Activated CD4-positive, alpha-beta memory T cell treated with anti-CD3 and anti-CD28 coated beads for 36 hours (primary cell): ENCODE measurements at regions of chr11 and their contacts with region 1.

Region 1: GRCh38 chr11:65013692-65014145 is 241 bp upstream of the ARL2 start:
- DNase-seq: peak; percentile 89
- H3K4me3 Mint-ChIP-seq: peak overlapping the region; percentile 87
- H3K27ac Mint-ChIP-seq: peak overlapping the region; percentile 98
- H3K4me1 Mint-ChIP-seq: peaks cover 25% of the 10 kb centered on the region
- H3K27me3 Mint-ChIP-seq: no peaks in the 10 kb centered on the region

Region 2: GRCh38 chr11:64846998-64847666 is 166.6 kb before region 1 on chr11:
- CTCF ChIA-PET with region 1: interaction called, 56 read pairs
- POLR2A ChIA-PET with region 1: no interaction called
- intact Hi-C with region 1: loop called (anchors 1 kb)
- DNase-seq: peak; percentile 94
- H3K4me3 Mint-ChIP-seq: no peak overlapping the region
- H3K27ac Mint-ChIP-seq: peak overlapping the region; percentile 18
- H3K4me1 Mint-ChIP-seq: peaks cover 48% of the 10 kb centered on the region
- H3K27me3 Mint-ChIP-seq: no peaks in the 10 kb centered on the region

Region 3: DNA sequence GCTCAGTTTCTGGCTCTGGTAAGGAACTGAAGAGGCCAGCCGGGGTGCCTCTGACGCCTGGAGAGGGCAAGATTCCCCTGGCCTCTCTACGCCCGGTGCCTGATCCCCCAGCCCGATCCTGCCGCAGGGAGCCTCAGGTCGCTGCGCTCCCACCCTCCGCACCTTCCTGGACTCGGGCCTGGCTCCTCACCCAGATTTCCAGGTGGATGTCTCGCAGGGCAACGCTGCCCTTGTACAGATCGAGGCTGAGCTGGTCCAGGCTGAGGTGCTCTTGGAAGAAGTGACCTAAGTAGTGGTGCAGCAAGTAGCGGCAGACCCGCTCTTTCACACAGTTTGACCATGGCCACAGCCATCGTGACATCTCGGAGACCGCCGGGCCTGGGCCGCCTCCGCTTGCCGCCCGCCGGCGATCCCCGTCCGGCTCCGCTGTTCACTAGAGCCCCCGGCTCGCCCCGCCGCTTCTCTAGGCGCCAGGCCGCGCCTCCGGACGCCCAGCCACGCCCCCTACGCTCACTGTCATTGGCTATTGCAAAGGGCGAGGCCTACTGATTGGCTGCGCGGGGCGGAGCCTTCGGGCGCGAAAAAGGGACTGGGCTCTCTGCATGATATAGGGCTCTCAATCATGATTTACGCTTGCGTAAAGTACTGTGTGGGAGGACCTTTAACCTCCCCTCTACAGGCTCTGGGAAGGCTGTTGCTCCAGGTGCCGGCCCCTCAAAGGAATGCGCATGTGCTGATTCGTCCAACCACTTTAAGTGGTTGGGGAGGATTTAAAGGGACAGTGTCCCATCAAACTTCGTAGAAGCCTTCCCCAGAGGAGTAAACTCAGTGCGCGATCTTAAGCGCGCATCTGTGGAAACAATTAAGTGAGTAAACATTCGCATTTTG is 96.7 kb before region 1 on chr11 and contains the start of gene ATG2A:
- CTCF ChIA-PET with region 1: interaction called, 6 read pairs
- POLR2A ChIA-PET with region 1: no interaction called
- intact Hi-C with region 1: loop called (anchors 1 kb)
- DNase-seq: peak; percentile 99
- H3K4me3 Mint-ChIP-seq: peak within 1 kb of the TSS; percentile 94
- H3K27ac Mint-ChIP-seq: peak within 1 kb of the TSS; percentile 86
- H3K4me1 Mint-ChIP-seq: peaks cover 26% of the 10 kb centered on the region
- H3K27me3 Mint-ChIP-seq: no peaks in the 10 kb centered on the region
- total RNA-seq, gene ATG2A: 20.2 to 20.5 TPM

Region 4: DNA sequence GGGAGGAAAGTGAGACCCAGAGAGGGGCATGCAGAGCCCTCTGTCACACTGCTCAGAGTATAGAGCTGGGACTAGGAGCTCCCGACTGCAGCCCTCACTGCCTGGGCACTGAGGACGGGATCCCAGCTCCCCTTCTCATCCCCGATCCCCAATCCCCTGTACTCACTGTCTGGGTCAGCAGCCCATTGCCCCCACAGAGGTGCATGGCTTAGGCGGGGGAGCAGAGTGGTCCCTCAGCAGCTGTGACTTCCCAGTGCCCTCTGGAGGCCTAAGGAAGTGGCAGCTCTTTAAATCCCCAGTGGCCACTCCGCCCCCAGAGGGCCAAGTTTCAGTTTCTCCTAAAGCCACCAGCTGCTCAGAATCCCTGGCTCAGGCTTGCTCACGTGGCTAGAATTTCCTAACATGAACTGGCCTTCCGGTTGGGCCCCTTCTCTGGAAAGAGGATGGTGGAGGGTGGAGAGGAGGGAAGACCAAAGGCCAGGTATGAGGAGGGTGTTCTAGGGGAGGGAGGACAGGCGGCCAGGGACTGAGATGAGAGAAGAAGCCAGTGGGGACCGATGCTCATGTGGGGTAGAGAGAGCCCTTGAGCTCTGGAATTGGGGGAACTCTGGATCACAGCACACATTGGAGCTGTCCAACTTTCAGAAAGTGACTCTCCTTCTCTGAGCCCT is 16.9 kb before region 1 on chr11 and contains the start of gene BATF2:
- CTCF ChIA-PET with region 1: interaction called, 31 read pairs
- POLR2A ChIA-PET with region 1: interaction called, 3 read pairs
- intact Hi-C with region 1: no loop called
- DNase-seq: peak; percentile 20
- H3K4me3 Mint-ChIP-seq: no peak within 1 kb of the TSS
- H3K27ac Mint-ChIP-seq: no peak within 1 kb of the TSS
- H3K4me1 Mint-ChIP-seq: peaks cover 13% of the 10 kb centered on the region
- H3K27me3 Mint-ChIP-seq: no peaks in the 10 kb centered on the region
- total RNA-seq, gene BATF2: 0.22 TPM in 1 of 2 experiments, not detected in the other

Region 5: DNA sequence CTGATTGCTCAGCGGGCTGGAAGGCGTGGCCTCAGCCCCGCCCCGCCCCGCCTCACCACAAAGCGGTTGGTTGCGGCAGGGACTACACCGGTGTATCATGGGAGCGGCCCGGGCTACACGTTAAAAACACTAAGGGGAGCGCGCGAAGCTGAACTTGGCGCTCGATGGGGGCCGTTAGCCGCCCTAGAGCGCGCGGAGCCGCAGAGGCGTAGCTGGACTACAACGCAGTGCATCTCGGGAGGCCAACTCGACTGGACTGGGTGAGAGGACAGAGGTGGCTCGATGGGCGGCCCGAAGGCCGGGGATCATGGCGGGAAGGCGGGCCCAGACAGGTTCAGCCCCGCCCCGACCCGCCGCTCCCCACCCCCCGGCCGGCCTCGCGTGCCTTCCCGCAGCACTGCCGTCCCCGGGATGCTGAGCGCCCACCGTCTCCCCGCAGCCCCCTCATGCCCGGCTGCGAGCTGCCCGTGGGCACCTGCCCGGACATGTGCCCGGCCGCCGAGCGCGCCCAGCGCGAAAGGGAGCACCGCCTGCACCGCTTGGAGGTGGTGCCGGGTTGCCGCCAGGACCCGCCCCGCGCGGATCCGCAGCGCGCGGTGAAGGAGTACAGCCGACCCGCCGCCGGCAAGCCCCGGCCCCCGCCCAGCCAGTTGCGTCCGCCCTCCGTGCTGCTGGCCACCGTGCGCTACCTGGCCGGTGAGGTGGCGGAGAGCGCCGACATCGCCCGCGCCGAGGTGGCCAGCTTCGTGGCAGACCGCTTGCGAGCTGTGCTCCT is 27.3 kb after region 1 on chr11 and contains the start of gene SAC3D1:
- CTCF ChIA-PET with region 1: interaction called, 13 read pairs
- POLR2A ChIA-PET with region 1: interaction called, 13 read pairs
- intact Hi-C with region 1: loop called (anchors 1 kb)
- DNase-seq: peak; percentile 94
- H3K4me3 Mint-ChIP-seq: peak within 1 kb of the TSS; percentile 87
- H3K27ac Mint-ChIP-seq: peak within 1 kb of the TSS; percentile 97
- H3K4me1 Mint-ChIP-seq: peaks cover 7% of the 10 kb centered on the region
- H3K27me3 Mint-ChIP-seq: no peaks in the 10 kb centered on the region
- total RNA-seq, gene SAC3D1: 14.2 to 14.7 TPM

Region 6: DNA sequence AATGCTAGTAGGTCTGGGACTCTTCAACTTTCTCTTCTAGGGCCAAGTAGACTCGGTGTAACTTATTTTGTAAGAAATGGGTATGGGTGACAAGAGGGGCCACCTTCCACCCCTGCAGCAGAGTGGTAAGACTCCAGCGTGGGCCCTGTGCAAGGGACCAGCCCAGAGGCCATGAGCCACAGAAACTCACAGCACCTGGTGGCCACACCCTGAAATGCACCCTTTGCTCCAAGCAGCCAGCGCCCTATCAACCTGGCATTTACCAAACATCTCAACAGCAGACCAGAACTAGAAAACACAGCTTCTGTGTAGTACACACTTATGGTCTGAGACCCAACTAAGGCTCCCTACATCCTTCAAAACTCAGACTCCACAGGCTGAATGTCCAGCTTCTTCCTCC is 64.4 kb after region 1 on chr11:
- CTCF ChIA-PET with region 1: interaction called, 13 read pairs
- POLR2A ChIA-PET with region 1: no interaction called
- intact Hi-C with region 1: loop called (anchors 5 kb)
- DNase-seq: peak; percentile 74
- H3K4me3 Mint-ChIP-seq: no peak overlapping the region
- H3K27ac Mint-ChIP-seq: no peak overlapping the region
- H3K4me1 Mint-ChIP-seq: peaks cover 30% of the 10 kb centered on the region
- H3K27me3 Mint-ChIP-seq: no peaks in the 10 kb centered on the region

Region 7: GRCh38 chr11:65111744-65112414 is 98.2 kb after region 1 on chr11 and contains the start of gene TM7SF2:
- CTCF ChIA-PET with region 1: interaction called, 46 read pairs
- POLR2A ChIA-PET with region 1: interaction called, 5 read pairs
- intact Hi-C with region 1: loop called (anchors 1 kb)
- DNase-seq: peak; percentile 96
- H3K4me3 Mint-ChIP-seq: peak within 1 kb of the TSS; percentile 84
- H3K27ac Mint-ChIP-seq: peak within 1 kb of the TSS; percentile 80
- H3K4me1 Mint-ChIP-seq: peaks cover 56% of the 10 kb centered on the region
- H3K27me3 Mint-ChIP-seq: no peaks in the 10 kb centered on the region
- total RNA-seq, gene TM7SF2: 19.2 to 21.0 TPM